ENCODE measurements at regions of chr7 and their contacts with region 1.

Region 1: GRCh38 chr7:34596892-34597291 is 61.1 kb upstream of the NPSR1 start:
- DNase-seq: no peak
- ATAC-seq: no peak

Region 2: GRCh38 chr7:34321000-34321581 is 275.8 kb before region 1 on chr7:
- intact Hi-C with region 1: loop called (anchors 2 kb)
- DNase-seq: peak; percentile 45
- ATAC-seq: peak; percentile 63

Measured in Right ventricle myocardium inferior (tissue), 1 donor.